Ascending aorta (tissue), 2 donors: ENCODE measurements at regions of chr6 and their contacts with region 1.

Region 1: GRCh38 chr6:20212392-20213217 is at the start of gene MBOAT1:
- DNase-seq: peak; percentile 61 to 94
- H3K4me3 ChIP-seq: peak within 1 kb of the TSS; percentile 84 to 90
- H3K27ac ChIP-seq: peak within 1 kb of the TSS; percentile 85 to 90
- H3K4me1 ChIP-seq: peaks cover 4 to 20% of the 10 kb centered on the region in 2 donors
- H3K27me3 ChIP-seq: no peaks in the 10 kb centered on the region
- CTCF ChIP-seq: no peak
- total RNA-seq, gene MBOAT1: 5.4 TPM

Region 2: DNA sequence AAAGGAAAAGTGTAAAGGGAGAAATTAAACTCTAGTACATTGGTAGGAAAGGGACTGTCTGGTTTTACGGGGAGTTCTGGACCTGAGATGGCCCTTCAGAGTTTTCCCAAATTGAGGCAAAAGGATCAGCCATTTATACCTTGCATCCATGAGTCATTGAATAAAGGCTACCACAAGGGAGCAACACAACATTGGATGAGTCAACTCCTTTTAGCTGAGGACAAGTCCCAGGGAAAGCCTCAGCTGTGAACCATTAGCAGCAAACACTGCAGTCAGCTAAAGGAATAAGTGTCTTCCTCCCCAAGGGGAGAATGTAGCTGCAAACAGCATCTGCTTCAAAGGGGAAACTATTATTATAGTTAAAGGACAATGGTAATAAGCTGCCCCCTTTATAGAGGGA is 844.1 kb before region 1 on chr6:
- intact Hi-C with region 1: no loop called
- DNase-seq: no peak
- H3K4me3 ChIP-seq: no peak overlapping the region
- H3K27ac ChIP-seq: no peak overlapping the region
- H3K4me1 ChIP-seq: no peaks in the 10 kb centered on the region
- H3K27me3 ChIP-seq: no peaks in the 10 kb centered on the region
- CTCF ChIP-seq: no peak

Region 3: GRCh38 chr6:20126789-20127653 is 85.6 kb before region 1 on chr6:
- intact Hi-C with region 1: loop called (anchors 5 kb)
- DNase-seq: peak in 1 of 2 donors; percentile 78
- H3K4me3 ChIP-seq: no peak overlapping the region
- H3K27ac ChIP-seq: peak overlapping the region; percentile 4 to 20
- H3K4me1 ChIP-seq: no peaks in the 10 kb centered on the region
- H3K27me3 ChIP-seq: no peaks in the 10 kb centered on the region
- CTCF ChIP-seq: peak; percentile 45 to 94 (median 94)

Region 4: DNA sequence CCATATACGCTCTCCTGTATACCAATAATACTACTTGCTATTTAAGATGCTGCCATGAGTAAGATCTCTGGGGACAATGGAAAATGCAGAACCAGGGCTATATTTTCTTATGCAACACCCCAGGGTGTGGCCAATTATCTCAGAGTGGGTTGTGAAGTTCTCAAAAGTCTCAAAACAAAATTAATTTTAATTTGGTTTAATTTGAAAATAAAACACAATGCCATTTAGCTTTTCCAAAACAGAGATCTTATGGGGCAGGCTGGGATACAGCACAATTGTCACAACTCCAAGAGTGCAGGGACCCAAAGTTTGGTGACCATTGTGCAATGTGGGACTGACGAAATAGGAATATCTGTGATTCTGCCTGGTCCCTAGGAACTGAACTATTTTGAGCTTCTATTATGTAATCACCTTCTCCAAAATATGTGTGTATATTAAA is 43.5 kb before region 1 on chr6:
- intact Hi-C with region 1: loop called (anchors 5 kb)
- DNase-seq: peak in 1 of 2 donors; percentile 65
- H3K4me3 ChIP-seq: no peak overlapping the region
- H3K27ac ChIP-seq: peak overlapping the region in 1 of 2 donors; percentile 37
- H3K4me1 ChIP-seq: peaks cover 0 to 6% of the 10 kb centered on the region in 2 donors
- H3K27me3 ChIP-seq: no peaks in the 10 kb centered on the region
- CTCF ChIP-seq: no peak

Region 5: DNA sequence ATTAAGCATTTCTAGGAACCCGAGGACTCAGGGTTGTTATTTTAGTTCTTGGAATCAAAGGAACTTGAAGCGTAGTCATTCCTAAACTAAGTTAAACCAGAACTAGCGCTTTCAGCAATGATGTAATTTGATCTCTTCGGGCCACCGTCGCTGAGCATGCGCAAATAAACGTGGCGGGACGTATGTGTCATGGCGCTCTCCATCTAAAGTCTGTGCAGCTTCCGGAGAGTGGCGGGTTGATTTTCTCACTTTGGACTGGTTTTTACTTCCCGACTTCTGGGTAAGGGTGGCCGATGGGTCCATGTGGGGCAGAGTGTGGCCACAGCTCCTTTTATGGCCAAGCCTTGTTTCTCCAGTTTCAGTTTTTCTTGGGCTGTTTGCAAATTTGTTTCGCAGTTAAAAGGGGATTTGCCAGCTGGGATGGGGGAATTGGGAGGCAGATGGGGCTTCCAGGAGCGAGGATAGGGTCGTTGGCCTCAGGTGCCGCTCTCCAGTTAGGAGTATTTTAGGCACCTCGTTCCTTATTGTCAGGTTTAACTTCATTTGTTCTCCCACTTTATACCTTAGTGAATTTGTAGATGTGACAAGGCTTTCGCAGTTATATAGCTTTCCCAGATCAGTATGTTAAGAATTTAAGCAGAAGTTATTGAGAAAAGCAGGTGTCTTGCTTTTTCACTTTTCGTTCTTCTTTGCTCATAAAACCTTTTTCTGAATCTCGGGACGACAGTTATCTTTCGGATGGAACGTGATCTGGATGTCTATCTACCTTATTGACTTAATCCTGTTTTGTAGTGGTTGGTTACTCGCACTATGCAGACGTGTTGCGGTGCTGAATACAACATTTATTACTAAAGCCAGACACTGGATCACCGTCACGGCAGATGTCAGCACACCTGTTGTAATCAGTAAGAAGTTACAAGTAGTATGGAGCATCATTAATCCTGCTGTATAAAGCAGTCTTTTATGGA is 322.0 kb after region 1 on chr6 and contains the start of gene CDKAL1:
- intact Hi-C with region 1: loop called (anchors 5 kb)
- DNase-seq: peak; percentile 71 to 96
- H3K4me3 ChIP-seq: peak within 1 kb of the TSS; percentile 69 to 83
- H3K27ac ChIP-seq: peak within 1 kb of the TSS; percentile 85
- H3K4me1 ChIP-seq: peaks cover 0 to 12% of the 10 kb centered on the region in 2 donors
- H3K27me3 ChIP-seq: no peaks in the 10 kb centered on the region
- CTCF ChIP-seq: no peak
- total RNA-seq, gene CDKAL1: 11.9 TPM